RWPE1 (cell line): ENCODE measurements at regions of chr5 and their contacts with region 1.

Region 1: DNA sequence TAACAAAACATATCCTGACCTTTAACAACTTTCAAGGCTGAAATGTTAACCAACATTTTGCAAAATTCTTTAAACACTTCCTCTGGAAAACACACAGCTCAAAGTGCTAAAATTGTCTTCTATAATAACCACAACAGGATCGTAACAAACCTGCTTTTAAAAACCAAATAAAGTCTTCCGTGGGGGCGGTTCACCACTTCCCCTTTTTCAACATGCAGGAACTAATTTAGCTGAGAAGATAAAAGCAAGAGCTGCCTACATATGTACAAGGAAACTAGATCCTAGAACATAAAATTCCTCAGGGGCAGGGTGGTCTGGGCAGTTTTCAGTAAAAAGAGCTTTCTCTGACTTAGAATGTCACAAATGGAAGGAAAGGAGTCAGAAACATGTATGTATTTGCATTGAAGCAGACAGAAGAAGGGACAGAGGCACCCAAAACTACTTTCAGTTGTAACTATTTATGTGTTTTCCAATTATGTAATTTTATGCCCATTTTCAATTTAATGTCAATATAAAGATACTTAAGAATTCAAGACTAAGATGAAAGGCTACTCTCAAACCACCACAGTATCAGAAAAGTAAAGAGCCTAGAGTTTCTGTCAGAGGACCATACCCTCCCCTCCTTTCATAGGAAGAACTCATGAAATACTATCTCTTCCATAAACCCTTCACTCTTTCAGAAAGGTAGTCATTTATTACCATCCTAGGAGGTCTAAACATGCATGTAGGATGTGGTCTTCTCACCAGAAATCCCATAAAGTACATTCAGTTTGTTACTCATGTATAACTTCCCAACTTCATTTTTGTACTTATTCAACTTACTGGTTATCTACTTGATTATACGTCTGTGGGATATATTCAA is 185.9 kb upstream of the RASA1 start:
- DNase-seq: no peak
- H3K27ac ChIP-seq: no peak overlapping the region
- CTCF ChIP-seq: no peak

Region 2: DNA sequence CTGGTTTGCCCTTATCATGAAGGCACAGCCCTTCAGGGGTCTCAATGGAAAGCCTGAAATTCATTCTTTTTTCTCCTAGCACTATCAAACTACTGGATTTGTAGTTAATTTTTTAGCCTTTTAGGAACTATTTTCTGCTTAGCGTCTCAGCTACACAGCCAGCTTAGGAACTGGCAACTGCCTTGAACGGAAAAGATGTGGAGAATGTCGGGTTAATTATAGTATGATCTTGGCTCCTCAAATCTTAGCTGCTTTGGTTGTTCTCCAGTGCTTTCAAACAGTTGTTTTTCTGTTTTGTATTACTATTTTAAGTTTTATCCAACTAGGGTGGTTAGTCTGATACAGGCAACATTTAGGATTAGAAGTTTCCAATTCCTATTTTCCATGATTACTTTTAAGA is 286.9 kb after region 1 on chr5:
- CTCF ChIA-PET with region 1: interaction called, 10 read pairs
- POLR2A ChIA-PET with region 1: no interaction called
- DNase-seq: no peak
- H3K27ac ChIP-seq: no peak overlapping the region
- CTCF ChIP-seq: no peak

Region 3: DNA sequence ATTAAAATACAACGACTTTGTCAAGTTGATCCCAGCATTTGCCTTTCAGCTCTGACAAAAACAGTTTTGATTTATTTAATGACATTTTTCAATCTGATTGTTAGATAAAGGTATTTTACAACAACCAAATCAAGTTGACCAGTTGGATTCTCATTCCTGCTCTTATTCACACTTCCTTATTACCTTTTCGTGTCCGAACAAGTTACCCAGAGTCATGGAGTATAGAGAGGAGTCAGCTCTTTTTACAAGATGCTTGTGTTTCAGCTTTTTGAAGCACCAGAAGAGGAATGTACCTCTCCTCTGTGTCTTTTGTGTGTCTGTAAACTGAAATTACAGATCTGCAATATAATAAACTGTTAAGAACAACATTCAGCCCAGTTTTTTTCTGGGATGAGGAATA is 1338.2 kb after region 1 on chr5:
- CTCF ChIA-PET with region 1: no interaction called
- POLR2A ChIA-PET with region 1: no interaction called
- DNase-seq: peak; percentile 39
- H3K27ac ChIP-seq: no peak overlapping the region
- CTCF ChIP-seq: no peak